K562 (cell line): ENCODE measurements at regions of chr6 and their contacts with region 1.

Region 1: DNA sequence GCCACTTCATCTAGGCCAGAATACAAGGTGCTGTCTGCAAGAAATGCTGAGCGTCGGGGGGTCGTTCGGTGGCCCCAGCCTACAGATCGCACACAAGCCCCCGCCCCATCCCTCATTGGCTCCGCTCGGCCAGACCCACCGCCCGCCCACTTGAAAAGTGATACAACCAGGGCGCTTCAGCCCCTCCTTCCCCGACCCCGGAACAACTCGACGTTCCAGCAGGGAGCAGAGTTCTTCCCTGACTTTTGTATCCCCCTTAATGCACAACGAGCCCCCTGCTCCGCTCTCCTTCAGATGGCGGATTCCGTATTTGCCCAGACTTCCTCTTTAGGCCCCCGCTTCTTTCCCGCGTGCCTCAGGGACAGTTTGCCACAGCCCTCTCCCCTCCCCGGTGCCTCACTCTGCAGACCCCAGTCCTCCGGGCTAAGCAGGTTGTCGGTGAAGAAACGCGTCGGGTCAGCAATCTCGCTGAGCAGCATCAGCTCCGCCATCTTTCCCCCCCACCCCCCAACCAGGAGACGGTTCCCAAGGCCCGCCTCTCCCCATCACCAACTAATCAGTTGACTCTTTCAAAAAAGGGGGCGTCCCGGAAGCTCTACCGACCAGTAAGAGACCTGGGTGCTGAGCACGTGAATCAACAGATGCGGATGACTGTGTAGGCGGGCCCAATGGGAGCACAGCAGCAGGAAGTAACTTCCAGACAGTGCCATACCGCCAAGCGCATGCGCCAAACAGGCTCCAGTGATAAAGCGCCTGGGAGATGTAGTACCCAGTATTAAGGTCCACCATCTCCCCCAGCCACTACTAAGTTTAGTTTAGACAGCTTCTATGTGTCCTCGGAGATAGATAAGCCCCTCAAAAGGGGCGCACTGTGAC is at the start of gene ATF6B:
- DNase-seq: peak; percentile 97 to 100 (median 98)
- ATAC-seq: peak; percentile 88
- H3K4me3 ChIP-seq: peak within 1 kb of the TSS; percentile 91
- H3K27ac ChIP-seq: peak within 1 kb of the TSS; percentile 86
- H3K4me1 ChIP-seq: peaks cover 31 to 32% of the 10 kb centered on the region in 2 experiments
- H3K27me3 ChIP-seq: no peaks in the 10 kb centered on the region
- CTCF ChIP-seq: no peak
- EP300 ChIP-seq: peak; percentile 53; the same call in 1 of the 2 replicates
- POLR2A ChIP-seq: peak; percentile 85
- RAD21 ChIP-seq: no peak
- polyA plus RNA-seq, gene ATF6B: 20.7 to 26.1 TPM

Region 2: GRCh38 chr6:32153564-32154513 is 25.9 kb after region 1 on chr6 and contains the start of gene PPT2:
- CTCF ChIA-PET with region 1: interaction called, 3 read pairs
- POLR2A ChIA-PET with region 1: interaction called, 7 read pairs
- in situ Hi-C with region 1: no loop called
- intact Hi-C with region 1: loop called (anchors 1 kb)
- DNase-seq: peak; percentile 88 to 97 (median 92)
- ATAC-seq: peak; percentile 83
- H3K4me3 ChIP-seq: peak within 1 kb of the TSS; percentile 65
- H3K27ac ChIP-seq: peak within 1 kb of the TSS; percentile 89
- H3K4me1 ChIP-seq: peaks cover 25 to 62% of the 10 kb centered on the region in 2 experiments; a peak in 4 of 5 replicates
- H3K27me3 ChIP-seq: no peaks in the 10 kb centered on the region
- CTCF ChIP-seq: peak; percentile 36 to 47 (median 40); a peak in 4 of 6 replicates
- EP300 ChIP-seq: peak; percentile 34; the same call in 1 of the 2 replicates
- POLR2A ChIP-seq: peak; percentile 82
- RAD21 ChIP-seq: peak; percentile 15 to 30; a peak in 3 of 4 replicates
- polyA plus RNA-seq, gene PPT2: 27.4 to 41.6 TPM